AG04450 (cell line): ENCODE measurements at regions of chrX and their contacts with region 1.

Region 1: GRCh38 chrX:17475449-17476217 is 100.6 kb downstream of the NHS start:
- DNase-seq: no peak
- H3K4me3 ChIP-seq: no peak overlapping the region
- H3K27ac ChIP-seq: no peak overlapping the region
- H3K27me3 ChIP-seq: no peaks in the 10 kb centered on the region
- CTCF ChIP-seq: no peak

Region 2: GRCh38 chrX:17355976-17356375 is 119.7 kb before region 1 on chrX:
- CTCF ChIA-PET with region 1: no interaction called
- POLR2A ChIA-PET with region 1: no interaction called
- DNase-seq: no peak
- H3K4me3 ChIP-seq: no peak overlapping the region
- H3K27ac ChIP-seq: no peak overlapping the region
- H3K27me3 ChIP-seq: peaks cover 2% of the 10 kb centered on the region
- CTCF ChIP-seq: no peak

Region 3: GRCh38 chrX:17425136-17425535 is 50.5 kb before region 1 on chrX:
- CTCF ChIA-PET with region 1: no interaction called
- POLR2A ChIA-PET with region 1: interaction called, 13 read pairs
- DNase-seq: no peak
- H3K4me3 ChIP-seq: no peak overlapping the region
- H3K27ac ChIP-seq: no peak overlapping the region
- H3K27me3 ChIP-seq: no peaks in the 10 kb centered on the region
- CTCF ChIP-seq: no peak